Vagina (tissue), 2 donors: ENCODE measurements at regions of chr10 and their contacts with region 1.

Region 1: GRCh38 chr10:29386342-29386999 is 97.6 kb downstream of the LYZL1 start:
- DNase-seq: no peak
- H3K4me3 ChIP-seq: no peak overlapping the region
- H3K27ac ChIP-seq: no peak overlapping the region
- H3K4me1 ChIP-seq: no peaks in the 10 kb centered on the region
- H3K27me3 ChIP-seq: no peaks in the 10 kb centered on the region
- CTCF ChIP-seq: peak; percentile 44 to 73 (median 72)
- POLR2A ChIP-seq: no peak

Region 2: DNA sequence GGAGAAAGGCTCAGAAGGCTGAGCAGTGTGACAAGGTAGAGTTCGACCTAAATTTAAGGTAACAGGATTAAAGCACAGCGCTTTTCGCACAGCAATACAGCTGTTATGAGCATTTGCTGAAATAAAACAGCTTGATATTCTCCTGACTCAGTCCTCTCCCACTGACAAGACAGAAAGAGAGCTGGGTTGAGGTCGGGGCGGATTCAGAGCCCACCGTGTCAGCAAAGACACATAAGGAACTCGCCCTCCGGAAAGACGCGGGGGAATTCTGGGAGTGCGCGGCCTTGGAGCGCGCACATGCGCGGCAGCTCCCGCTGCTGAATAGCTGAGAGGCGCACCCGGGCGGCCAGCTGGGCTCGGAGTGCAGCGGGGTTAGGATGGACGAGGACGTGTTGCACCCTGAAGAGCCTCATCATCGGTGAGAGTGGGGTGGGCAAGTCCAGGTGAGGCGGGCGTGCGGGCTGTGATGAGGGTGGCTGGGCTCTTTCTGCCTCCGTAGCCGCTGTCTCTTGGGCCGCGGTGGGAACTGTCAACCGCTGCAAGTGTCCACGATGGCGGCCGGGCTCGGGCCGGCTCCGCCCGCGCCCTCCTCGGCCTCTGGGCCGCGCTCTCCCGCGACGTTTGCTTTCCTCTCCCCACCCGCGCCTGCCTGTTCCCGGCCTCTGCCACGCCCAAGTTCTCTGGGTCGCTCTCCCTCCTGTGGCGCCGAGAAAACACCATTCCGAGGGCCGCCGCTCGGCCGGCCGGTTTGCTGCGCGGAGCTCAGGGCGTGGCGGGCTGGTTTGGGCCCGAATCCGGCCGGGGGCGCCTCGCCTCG is 23.0 kb after region 1 on chr10:
- intact Hi-C with region 1: no loop called
- DNase-seq: no peak
- H3K4me3 ChIP-seq: peak overlapping the region; percentile 64 to 65
- H3K27ac ChIP-seq: peak overlapping the region; percentile 97
- H3K4me1 ChIP-seq: peaks cover 49% of the 10 kb centered on the region
- H3K27me3 ChIP-seq: no peaks in the 10 kb centered on the region
- CTCF ChIP-seq: no peak
- POLR2A ChIP-seq: peak in 1 of 2 donors; percentile 36

Region 3: GRCh38 chr10:29446327-29446726 is 59.9 kb after region 1 on chr10:
- intact Hi-C with region 1: loop called (anchors 5 kb)
- DNase-seq: no peak
- H3K4me3 ChIP-seq: no peak overlapping the region
- H3K27ac ChIP-seq: no peak overlapping the region
- H3K4me1 ChIP-seq: peaks cover 16% of the 10 kb centered on the region
- H3K27me3 ChIP-seq: no peaks in the 10 kb centered on the region
- CTCF ChIP-seq: no peak
- POLR2A ChIP-seq: no peak